Naive thymus-derived CD4-positive, alpha-beta T cell (primary cell): ENCODE measurements at regions of chr2 and their contacts with region 1.

Region 1: DNA sequence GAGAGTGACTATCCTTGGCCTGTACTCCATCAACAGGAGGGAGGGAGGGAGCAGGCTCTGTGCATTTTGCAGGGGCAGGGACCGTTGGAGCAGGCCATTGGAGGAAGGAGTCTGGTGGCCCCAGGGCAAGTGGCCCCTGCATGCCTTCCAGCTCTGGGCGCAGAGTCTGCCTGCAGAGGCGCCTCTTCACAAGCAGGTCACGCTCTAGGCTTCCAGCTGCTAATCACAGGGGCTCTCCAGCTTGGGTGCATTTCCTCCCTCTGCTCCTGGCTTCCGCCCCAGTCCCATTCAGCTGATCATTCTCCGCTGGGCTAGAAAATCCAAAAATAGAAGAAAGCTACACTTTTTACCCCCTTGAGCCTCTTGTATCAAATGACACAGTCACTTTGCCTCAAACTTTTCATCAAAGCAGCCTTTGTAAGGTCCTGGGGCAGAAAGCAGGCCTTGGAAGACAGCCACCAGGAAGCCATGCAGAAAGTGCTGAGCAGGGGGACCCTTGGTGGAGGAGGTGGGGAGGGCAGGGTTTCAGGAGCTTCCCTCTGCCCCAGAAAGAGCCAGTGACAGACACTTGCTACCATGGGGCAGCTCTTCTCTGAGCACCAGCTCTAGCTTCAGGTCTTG is 11.3 kb downstream of the TMEM247 start:
- DNase-seq: peak in 1 of 9 donors; percentile 12
- ATAC-seq: no peak
- H3K4me3 ChIP-seq: no peak overlapping the region
- H3K4me3 Mint-ChIP-seq: no peak overlapping the region
- H3K27ac ChIP-seq: no peak overlapping the region
- H3K27ac Mint-ChIP-seq: peak overlapping the region in 1 of 9 donors; percentile 51
- H3K4me1 ChIP-seq: no peaks in the 10 kb centered on the region
- H3K4me1 Mint-ChIP-seq: peaks cover 0 to 11% (median 7%) of the 10 kb centered on the region in 7 donors
- H3K27me3 ChIP-seq: no peaks in the 10 kb centered on the region
- H3K27me3 Mint-ChIP-seq: peaks cover 0 to 2% (median 0%) of the 10 kb centered on the region in 5 donors

Region 2: GRCh38 chr2:46555011-46555410 is 64.4 kb after region 1 on chr2:
- CTCF ChIA-PET with region 1: interaction called, 3 read pairs
- POLR2A ChIA-PET with region 1: no interaction called
- intact Hi-C with region 1: loop called in 1 of 2 experiments (anchors 2 kb)
- DNase-seq: peak in 2 of 9 donors; percentile 25 to 26
- ATAC-seq: peak; percentile 54
- H3K4me3 ChIP-seq: no peak overlapping the region
- H3K4me3 Mint-ChIP-seq: no peak overlapping the region
- H3K27ac ChIP-seq: no peak overlapping the region
- H3K27ac Mint-ChIP-seq: peak overlapping the region in 1 of 9 donors; percentile 32
- H3K4me1 ChIP-seq: no peaks in the 10 kb centered on the region
- H3K4me1 Mint-ChIP-seq: peaks cover 10 to 54% (median 22%) of the 10 kb centered on the region in 7 donors
- H3K27me3 ChIP-seq: no peaks in the 10 kb centered on the region
- H3K27me3 Mint-ChIP-seq: no peaks in the 10 kb centered on the region

Region 3: DNA sequence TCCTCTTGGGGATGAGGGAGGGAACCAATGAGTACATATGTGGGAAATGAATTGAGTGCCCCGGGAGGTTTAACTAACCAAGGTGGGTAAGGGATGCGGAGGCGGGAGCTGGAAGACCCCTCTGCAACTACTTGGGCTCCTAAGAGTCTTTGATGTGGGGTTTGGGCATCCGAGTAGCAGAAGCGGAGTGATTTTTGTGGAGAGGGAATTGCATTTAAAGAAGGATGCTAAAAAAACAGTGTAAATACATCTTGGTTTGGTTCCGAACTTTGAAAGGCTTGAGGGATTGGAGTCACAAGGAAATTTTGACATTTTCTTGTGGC is 209.3 kb after region 1 on chr2:
- CTCF ChIA-PET with region 1: no interaction called
- POLR2A ChIA-PET with region 1: no interaction called
- intact Hi-C with region 1: no loop called
- DNase-seq: peak in 3 of 9 donors; percentile 3 to 24 (median 14)
- ATAC-seq: no peak
- H3K4me3 ChIP-seq: peak overlapping the region; percentile 46
- H3K4me3 Mint-ChIP-seq: peak overlapping the region; percentile 87 to 99 (median 94)
- H3K27ac ChIP-seq: peak overlapping the region; percentile 84
- H3K27ac Mint-ChIP-seq: peak overlapping the region; percentile 79 to 95 (median 91)
- H3K4me1 ChIP-seq: peaks cover 4 to 19% of the 10 kb centered on the region in 2 donors
- H3K4me1 Mint-ChIP-seq: peaks cover 31 to 68% (median 55%) of the 10 kb centered on the region in 7 donors
- H3K27me3 ChIP-seq: no peaks in the 10 kb centered on the region
- H3K27me3 Mint-ChIP-seq: peaks cover 0 to 10% (median 0%) of the 10 kb centered on the region in 5 donors